Vagina (tissue), 2 donors: ENCODE measurements at regions of chr16 and their contacts with region 1.

Region 1: DNA sequence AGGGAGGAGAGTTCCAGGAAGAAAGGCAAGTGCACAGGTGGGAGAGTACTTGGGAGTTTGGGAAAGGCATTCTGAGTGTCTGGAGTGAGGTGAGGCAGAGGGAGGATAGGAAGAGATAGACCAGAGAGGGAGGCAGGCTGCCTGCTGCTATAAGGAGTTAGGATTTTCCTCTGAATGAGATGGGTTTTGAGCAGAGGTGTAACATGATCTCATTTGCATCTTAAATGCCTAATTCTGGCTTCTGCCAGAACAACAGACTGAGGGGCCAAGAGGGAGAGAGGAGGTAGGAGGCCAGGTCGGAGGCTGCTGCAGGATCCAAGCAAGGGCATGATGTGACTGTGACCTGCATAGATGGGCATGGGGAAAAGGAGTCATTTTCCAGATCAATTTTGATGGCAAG is 31.5 kb upstream of the IRX6 start:
- DNase-seq: no peak
- H3K4me3 ChIP-seq: no peak overlapping the region
- H3K27ac ChIP-seq: no peak overlapping the region
- H3K4me1 ChIP-seq: no peaks in the 10 kb centered on the region
- H3K27me3 ChIP-seq: no peaks in the 10 kb centered on the region
- CTCF ChIP-seq: no peak
- POLR2A ChIP-seq: no peak

Region 2: GRCh38 chr16:55225972-55226542 is 66.4 kb before region 1 on chr16:
- intact Hi-C with region 1: no loop called
- DNase-seq: peak in 1 of 2 donors; percentile 67
- H3K4me3 ChIP-seq: no peak overlapping the region
- H3K27ac ChIP-seq: no peak overlapping the region
- H3K4me1 ChIP-seq: no peaks in the 10 kb centered on the region
- H3K27me3 ChIP-seq: no peaks in the 10 kb centered on the region
- CTCF ChIP-seq: no peak
- POLR2A ChIP-seq: no peak

Region 3: DNA sequence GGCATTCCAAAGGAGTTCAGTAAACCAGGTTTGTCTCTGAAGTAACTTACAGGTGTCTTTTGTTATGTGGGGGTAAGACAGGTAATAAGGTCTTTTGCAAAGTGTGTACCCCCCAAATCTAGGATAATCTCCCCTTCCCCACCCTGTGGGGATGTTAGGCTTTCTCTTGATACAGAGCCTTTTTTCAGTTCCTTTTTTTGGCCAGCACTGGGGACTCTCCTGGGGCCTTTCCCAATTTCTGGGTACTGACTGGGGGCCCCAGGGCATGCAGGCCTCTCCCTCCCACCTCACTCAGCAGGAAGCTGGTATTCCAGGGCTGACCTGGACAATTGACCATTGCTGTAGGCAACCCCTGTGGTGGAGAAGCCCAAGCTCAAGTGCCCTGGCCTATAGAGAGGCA is 52.8 kb before region 1 on chr16:
- intact Hi-C with region 1: loop called (anchors 2 kb)
- DNase-seq: no peak
- H3K4me3 ChIP-seq: no peak overlapping the region
- H3K27ac ChIP-seq: no peak overlapping the region
- H3K4me1 ChIP-seq: no peaks in the 10 kb centered on the region
- H3K27me3 ChIP-seq: no peaks in the 10 kb centered on the region
- CTCF ChIP-seq: no peak
- POLR2A ChIP-seq: no peak

Region 4: DNA sequence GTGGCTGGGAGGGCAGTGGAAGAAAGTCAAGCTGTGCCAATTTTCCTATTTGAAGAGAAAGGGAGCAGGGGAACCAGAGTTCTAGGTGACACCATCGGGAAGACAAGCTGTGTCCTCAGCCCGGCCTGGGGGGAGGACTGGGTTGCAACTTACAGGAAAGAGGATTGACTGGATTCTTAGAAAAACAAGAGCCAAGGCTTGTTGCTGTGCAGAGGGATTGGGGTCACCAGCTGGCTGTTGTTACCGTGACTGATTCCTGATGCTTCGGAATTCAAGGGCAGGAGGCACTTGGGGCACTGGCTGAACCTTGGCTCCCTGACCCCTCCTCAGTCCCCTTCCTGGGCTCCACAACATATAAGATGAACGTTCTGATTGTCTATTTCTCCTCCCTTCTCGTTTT is 169.8 kb after region 1 on chr16:
- intact Hi-C with region 1: no loop called
- DNase-seq: no peak
- H3K4me3 ChIP-seq: no peak overlapping the region
- H3K27ac ChIP-seq: no peak overlapping the region
- H3K4me1 ChIP-seq: no peaks in the 10 kb centered on the region
- H3K27me3 ChIP-seq: no peaks in the 10 kb centered on the region
- CTCF ChIP-seq: no peak
- POLR2A ChIP-seq: no peak

Region 5: GRCh38 chr16:56281256-56281805 is 988.8 kb after region 1 on chr16:
- intact Hi-C with region 1: no loop called
- DNase-seq: no peak
- H3K4me3 ChIP-seq: no peak overlapping the region
- H3K27ac ChIP-seq: no peak overlapping the region
- H3K4me1 ChIP-seq: no peaks in the 10 kb centered on the region
- H3K27me3 ChIP-seq: no peaks in the 10 kb centered on the region
- CTCF ChIP-seq: peak in 1 of 3 experiments; percentile 11
- POLR2A ChIP-seq: no peak